Prostate gland (tissue), 2 donors: ENCODE measurements at regions of chrX and their contacts with region 1.

Region 1: GRCh38 chrX:137051978-137052642 is 18.3 kb upstream of the GPR101 start:
- DNase-seq: peak; percentile 6
- H3K4me3 ChIP-seq: peak overlapping the region; percentile 16
- H3K27ac ChIP-seq: no peak overlapping the region
- H3K4me1 ChIP-seq: no peaks in the 10 kb centered on the region
- H3K27me3 ChIP-seq: no peaks in the 10 kb centered on the region
- CTCF ChIP-seq: peak in 3 of 4 experiments; percentile 29 to 55 (median 51)
- POLR2A ChIP-seq: no peak

Region 2: GRCh38 chrX:136954930-136955329 is 97.2 kb before region 1 on chrX:
- intact Hi-C with region 1: loop called (anchors 5 kb)
- DNase-seq: no peak
- H3K4me3 ChIP-seq: no peak overlapping the region
- H3K27ac ChIP-seq: no peak overlapping the region
- H3K4me1 ChIP-seq: no peaks in the 10 kb centered on the region
- H3K27me3 ChIP-seq: no peaks in the 10 kb centered on the region
- CTCF ChIP-seq: peak in 3 of 4 experiments; percentile 21 to 44 (median 22)
- POLR2A ChIP-seq: no peak